ENCODE measurements at regions of chr16 and their contacts with region 1.

Region 1: DNA sequence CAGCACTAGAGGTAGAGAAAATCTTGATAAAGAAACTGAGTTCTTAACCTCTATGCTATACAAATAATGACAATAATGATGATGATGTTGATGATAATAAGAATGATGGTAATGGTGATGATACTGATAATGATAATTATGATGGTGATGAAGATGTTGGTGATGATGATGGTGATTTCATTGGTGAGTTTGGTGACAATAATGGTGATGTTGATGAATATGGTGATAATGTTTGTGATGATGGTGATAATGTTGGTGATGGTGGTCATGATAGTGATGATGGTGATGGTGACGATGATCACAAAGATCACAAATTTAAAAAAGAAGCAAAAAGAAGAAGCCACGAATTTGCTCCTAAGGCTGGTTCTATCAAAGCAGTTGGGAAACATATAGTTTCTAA is 519.0 kb upstream of the C16orf82 start:
- DNase-seq: no peak
- H3K4me3 ChIP-seq: no peak overlapping the region
- H3K27ac ChIP-seq: no peak overlapping the region
- H3K4me1 ChIP-seq: no peaks in the 10 kb centered on the region
- H3K27me3 ChIP-seq: peaks cover 19% of the 10 kb centered on the region
- CTCF ChIP-seq: no peak

Region 2: DNA sequence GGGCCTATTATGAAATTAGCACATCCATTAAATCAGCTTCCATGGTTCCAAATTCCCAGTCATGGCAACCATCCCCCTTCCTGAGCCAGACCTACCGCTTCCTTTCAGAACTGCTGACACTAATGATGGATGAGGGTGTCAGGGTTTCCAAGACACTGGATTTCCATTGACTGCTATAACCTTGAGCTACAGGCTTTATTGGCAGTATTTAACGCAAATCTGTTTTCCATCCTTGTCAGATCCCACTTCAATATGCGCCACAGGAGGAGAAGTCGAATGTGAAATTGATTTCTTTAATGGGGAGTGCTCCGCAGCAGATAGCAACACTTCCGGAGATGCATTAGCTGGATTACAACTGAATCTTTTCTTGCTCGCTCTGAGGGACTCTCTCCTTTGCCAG is 658.8 kb before region 1 on chr16:
- CTCF ChIA-PET with region 1: no interaction called
- POLR2A ChIA-PET with region 1: no interaction called
- intact Hi-C with region 1: no loop called
- DNase-seq: peak; percentile 52
- H3K4me3 ChIP-seq: no peak overlapping the region
- H3K27ac ChIP-seq: peak overlapping the region; percentile 51
- H3K4me1 ChIP-seq: peaks cover 16% of the 10 kb centered on the region
- H3K27me3 ChIP-seq: no peaks in the 10 kb centered on the region
- CTCF ChIP-seq: no peak

Region 3: DNA sequence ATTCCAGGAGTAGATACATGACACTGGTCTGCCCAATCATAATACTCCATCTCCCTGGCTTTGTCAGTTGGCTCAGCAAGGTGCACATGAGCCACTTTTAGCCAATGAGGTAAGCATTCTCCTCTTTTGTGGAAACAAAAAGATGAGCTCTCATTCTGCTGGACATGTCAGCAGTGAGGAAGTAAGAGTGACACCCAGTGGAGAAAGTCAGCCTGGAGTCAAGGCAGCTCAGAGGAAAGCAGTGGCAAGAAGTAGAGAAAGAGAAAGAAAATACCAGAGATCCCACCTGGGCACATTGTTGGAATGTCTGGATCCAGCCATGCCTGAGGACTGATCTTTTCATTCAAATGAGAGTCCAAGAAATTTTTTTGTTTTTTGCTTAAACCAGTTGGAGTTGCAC is 22.1 kb after region 1 on chr16:
- CTCF ChIA-PET with region 1: no interaction called
- POLR2A ChIA-PET with region 1: no interaction called
- intact Hi-C with region 1: no loop called
- DNase-seq: peak; percentile 50
- H3K4me3 ChIP-seq: no peak overlapping the region
- H3K27ac ChIP-seq: no peak overlapping the region
- H3K4me1 ChIP-seq: no peaks in the 10 kb centered on the region
- H3K27me3 ChIP-seq: no peaks in the 10 kb centered on the region
- CTCF ChIP-seq: peak; percentile 65

Region 4: GRCh38 chr16:26981266-26981938 is 433.7 kb after region 1 on chr16:
- CTCF ChIA-PET with region 1: no interaction called
- POLR2A ChIA-PET with region 1: interaction called, 13 read pairs
- intact Hi-C with region 1: no loop called
- DNase-seq: peak; percentile 12
- H3K4me3 ChIP-seq: no peak overlapping the region
- H3K27ac ChIP-seq: no peak overlapping the region
- H3K4me1 ChIP-seq: no peaks in the 10 kb centered on the region
- H3K27me3 ChIP-seq: no peaks in the 10 kb centered on the region
- CTCF ChIP-seq: no peak

Measured in A673 (cell line).